Calu3 (cell line): ENCODE measurements at regions of chr20 and their contacts with region 1.

Region 1: GRCh38 chr20:9609887-9610502 is 95.6 kb downstream of the LAMP5 start:
- DNase-seq: no peak
- H3K4me3 Mint-ChIP-seq: no peak overlapping the region
- H3K27ac Mint-ChIP-seq: no peak overlapping the region
- H3K4me1 Mint-ChIP-seq: no peaks in the 10 kb centered on the region
- H3K27me3 Mint-ChIP-seq: no peaks in the 10 kb centered on the region
- CTCF ChIP-seq: no peak

Region 2: GRCh38 chr20:9407805-9408421 is 202.1 kb before region 1 on chr20:
- CTCF ChIA-PET with region 1: interaction called, 43 read pairs
- intact Hi-C with region 1: loop called (anchors 1 kb)
- DNase-seq: peak; percentile 62
- H3K4me3 Mint-ChIP-seq: no peak overlapping the region
- H3K27ac Mint-ChIP-seq: no peak overlapping the region
- H3K4me1 Mint-ChIP-seq: no peaks in the 10 kb centered on the region
- H3K27me3 Mint-ChIP-seq: no peaks in the 10 kb centered on the region
- CTCF ChIP-seq: peak; percentile 70

Region 3: GRCh38 chr20:9467995-9468394 is 142.0 kb before region 1 on chr20:
- CTCF ChIA-PET with region 1: interaction called, 6 read pairs
- intact Hi-C with region 1: loop called (anchors 1 kb)
- DNase-seq: peak; percentile 4
- H3K4me3 Mint-ChIP-seq: no peak overlapping the region
- H3K27ac Mint-ChIP-seq: no peak overlapping the region
- H3K4me1 Mint-ChIP-seq: no peaks in the 10 kb centered on the region
- H3K27me3 Mint-ChIP-seq: no peaks in the 10 kb centered on the region
- CTCF ChIP-seq: peak; percentile 54